ENCODE measurements at regions of chr13 and their contacts with region 1.

Region 1: GRCh38 chr13:24053519-24054251 is 106.8 kb upstream of the SPATA13 start:
- DNase-seq: peak; percentile 78
- ATAC-seq: peak; percentile 99
- H3K4me3 Mint-ChIP-seq: no peak overlapping the region
- H3K27ac Mint-ChIP-seq: no peak overlapping the region
- H3K4me1 Mint-ChIP-seq: no peaks in the 10 kb centered on the region
- H3K27me3 Mint-ChIP-seq: peaks cover 2% of the 10 kb centered on the region

Region 2: GRCh38 chr13:23921451-23921888 is 132.2 kb before region 1 on chr13:
- CTCF ChIA-PET with region 1: no interaction called
- POLR2A ChIA-PET with region 1: no interaction called
- intact Hi-C with region 1: loop called (anchors 1 to 2 kb)
- DNase-seq: no peak
- ATAC-seq: peak; percentile 36
- H3K4me3 Mint-ChIP-seq: no peak overlapping the region
- H3K27ac Mint-ChIP-seq: no peak overlapping the region
- H3K4me1 Mint-ChIP-seq: no peaks in the 10 kb centered on the region
- H3K27me3 Mint-ChIP-seq: peaks cover 23% of the 10 kb centered on the region

Region 3: DNA sequence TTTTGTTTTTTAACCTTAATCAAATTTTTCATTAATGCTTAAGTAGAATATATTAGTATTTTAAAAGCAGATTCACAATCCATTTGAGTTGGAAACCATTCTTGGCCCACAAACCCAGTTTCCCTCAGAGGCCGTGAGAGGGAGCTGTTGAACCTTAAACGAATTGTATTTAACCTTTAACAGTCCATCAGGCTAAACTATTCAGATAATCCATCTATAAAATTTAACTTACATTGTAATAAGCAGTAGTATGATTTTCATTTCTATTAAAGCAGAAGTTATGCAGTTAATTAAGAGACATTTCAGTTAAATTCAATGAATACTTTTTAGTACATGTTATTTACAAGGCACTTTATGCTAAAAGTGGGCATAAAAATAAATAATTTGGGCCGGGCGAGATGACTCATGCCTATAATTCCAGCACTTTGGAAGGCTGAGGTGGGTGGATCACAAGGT is 33.3 kb before region 1 on chr13:
- CTCF ChIA-PET with region 1: interaction called, 5 read pairs
- POLR2A ChIA-PET with region 1: no interaction called
- intact Hi-C with region 1: loop called in 1 of 2 experiments (anchors 2 kb)
- DNase-seq: peak; percentile 61
- ATAC-seq: no peak
- H3K4me3 Mint-ChIP-seq: no peak overlapping the region
- H3K27ac Mint-ChIP-seq: no peak overlapping the region
- H3K4me1 Mint-ChIP-seq: no peaks in the 10 kb centered on the region
- H3K27me3 Mint-ChIP-seq: no peaks in the 10 kb centered on the region

Region 4: GRCh38 chr13:24038841-24039330 is 14.8 kb before region 1 on chr13:
- CTCF ChIA-PET with region 1: interaction called, 21 read pairs
- POLR2A ChIA-PET with region 1: interaction called, 3 read pairs
- intact Hi-C with region 1: no loop called
- DNase-seq: no peak
- ATAC-seq: no peak
- H3K4me3 Mint-ChIP-seq: no peak overlapping the region
- H3K27ac Mint-ChIP-seq: no peak overlapping the region
- H3K4me1 Mint-ChIP-seq: peaks cover 6% of the 10 kb centered on the region
- H3K27me3 Mint-ChIP-seq: peaks cover 2% of the 10 kb centered on the region

Region 5: GRCh38 chr13:24220086-24220703 is 166.5 kb after region 1 on chr13:
- CTCF ChIA-PET with region 1: interaction called, 38 read pairs
- POLR2A ChIA-PET with region 1: no interaction called
- intact Hi-C with region 1: loop called (anchors 1 kb)
- DNase-seq: peak; percentile 69
- ATAC-seq: peak; percentile 98
- H3K4me3 Mint-ChIP-seq: no peak overlapping the region
- H3K27ac Mint-ChIP-seq: no peak overlapping the region
- H3K4me1 Mint-ChIP-seq: peaks cover 29% of the 10 kb centered on the region
- H3K27me3 Mint-ChIP-seq: no peaks in the 10 kb centered on the region

Measured in activated CD4-positive, alpha-beta T cell treated with anti-CD3 and anti-CD28 coated beads for 36 hours (primary cell).